ENCODE measurements at regions of chr14 and their contacts with region 1.

Region 1: GRCh38 chr14:52552063-52552988 is at the starts of genes GPR137C and TXNDC16:
- DNase-seq: peak; percentile 100
- H3K4me3 ChIP-seq: peak within 1 kb of the TSS; percentile 76 to 88 (median 84)
- H3K27ac ChIP-seq: peak within 1 kb of the TSS; percentile 37
- H3K4me1 ChIP-seq: peaks cover 9% of the 10 kb centered on the region
- H3K27me3 ChIP-seq: no peaks in the 10 kb centered on the region
- CTCF ChIP-seq: no peak
- POLR2A ChIP-seq: no peak
- total RNA-seq, gene GPR137C: 3.8 and 5.7 TPM in 2 replicates
- total RNA-seq, gene TXNDC16: 4.5 and 4.8 TPM in 2 replicates

Region 2: GRCh38 chr14:50667996-50668825 is 1884.1 kb before region 1 on chr14 and contains the start of gene SAV1:
- CTCF ChIA-PET with region 1: no interaction called
- POLR2A ChIA-PET with region 1: no interaction called
- dilution Hi-C with region 1: no loop called
- intact Hi-C with region 1: loop called (anchors 10 kb)
- DNase-seq: peak; percentile 82
- H3K4me3 ChIP-seq: peak within 1 kb of the TSS; percentile 70 to 85 (median 81)
- H3K27ac ChIP-seq: peak within 1 kb of the TSS; percentile 81
- H3K4me1 ChIP-seq: peaks cover 23% of the 10 kb centered on the region
- H3K27me3 ChIP-seq: no peaks in the 10 kb centered on the region
- CTCF ChIP-seq: no peak
- POLR2A ChIP-seq: peak; percentile 99
- total RNA-seq, gene SAV1: 27.8 and 31.0 TPM in 2 replicates

Region 3: GRCh38 chr14:52583544-52583943 is 31.2 kb after region 1 on chr14:
- CTCF ChIA-PET with region 1: interaction called, 3 read pairs
- POLR2A ChIA-PET with region 1: no interaction called
- dilution Hi-C with region 1: no loop called
- intact Hi-C with region 1: loop called (anchors 2 kb)
- DNase-seq: no peak
- H3K4me3 ChIP-seq: no peak overlapping the region
- H3K27ac ChIP-seq: no peak overlapping the region
- H3K4me1 ChIP-seq: peaks cover 12% of the 10 kb centered on the region
- H3K27me3 ChIP-seq: no peaks in the 10 kb centered on the region
- CTCF ChIP-seq: no peak
- POLR2A ChIP-seq: no peak

Region 4: DNA sequence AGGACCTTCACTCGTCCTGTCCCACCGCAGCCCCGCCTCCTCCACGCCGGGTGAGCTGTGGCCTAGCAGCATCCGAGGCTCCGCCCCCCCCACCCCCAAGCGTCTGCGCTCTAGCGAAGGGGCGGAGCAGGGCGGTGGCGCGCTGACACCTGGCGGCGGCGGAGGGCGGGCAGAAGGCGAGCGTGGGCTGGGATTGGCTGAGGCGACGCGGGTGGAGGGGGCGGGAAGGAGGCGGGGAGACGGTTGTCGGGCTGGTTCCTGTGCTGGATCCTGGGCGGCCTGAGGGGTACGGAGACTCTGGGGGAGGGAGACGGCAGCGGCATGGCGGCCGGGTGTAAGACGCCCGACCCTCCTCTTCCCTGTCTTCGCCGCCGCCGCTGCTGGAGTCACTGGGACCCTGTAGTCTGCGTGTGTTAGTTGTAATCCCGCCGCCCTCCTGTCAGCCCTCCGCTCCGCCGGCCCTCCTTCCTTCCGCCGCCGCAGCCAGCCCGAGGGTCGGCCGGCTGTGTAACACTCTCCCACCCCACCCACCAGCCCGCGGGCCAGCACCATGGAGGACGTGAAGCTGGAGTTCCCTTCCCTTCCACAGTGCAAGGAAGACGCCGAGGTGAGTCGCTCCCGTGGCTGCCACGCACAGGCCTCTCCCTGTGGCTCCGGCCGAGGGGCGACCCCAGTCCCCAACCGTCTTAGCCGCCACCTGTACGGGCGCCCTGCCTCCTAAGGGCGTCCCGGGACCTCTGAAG is 177.8 kb after region 1 on chr14 and contains the start of gene STYX:
- CTCF ChIA-PET with region 1: no interaction called
- POLR2A ChIA-PET with region 1: no interaction called
- dilution Hi-C with region 1: no loop called
- intact Hi-C with region 1: loop called (anchors 2 kb)
- DNase-seq: peak; percentile 99
- H3K4me3 ChIP-seq: peak within 1 kb of the TSS; percentile 50 to 98 (median 88)
- H3K27ac ChIP-seq: peak within 1 kb of the TSS; percentile 29
- H3K4me1 ChIP-seq: peaks cover 3% of the 10 kb centered on the region
- H3K27me3 ChIP-seq: no peaks in the 10 kb centered on the region
- CTCF ChIP-seq: no peak
- POLR2A ChIP-seq: peak; percentile 78
- total RNA-seq, gene STYX: 21.0 and 21.3 TPM in 2 replicates

Region 5: DNA sequence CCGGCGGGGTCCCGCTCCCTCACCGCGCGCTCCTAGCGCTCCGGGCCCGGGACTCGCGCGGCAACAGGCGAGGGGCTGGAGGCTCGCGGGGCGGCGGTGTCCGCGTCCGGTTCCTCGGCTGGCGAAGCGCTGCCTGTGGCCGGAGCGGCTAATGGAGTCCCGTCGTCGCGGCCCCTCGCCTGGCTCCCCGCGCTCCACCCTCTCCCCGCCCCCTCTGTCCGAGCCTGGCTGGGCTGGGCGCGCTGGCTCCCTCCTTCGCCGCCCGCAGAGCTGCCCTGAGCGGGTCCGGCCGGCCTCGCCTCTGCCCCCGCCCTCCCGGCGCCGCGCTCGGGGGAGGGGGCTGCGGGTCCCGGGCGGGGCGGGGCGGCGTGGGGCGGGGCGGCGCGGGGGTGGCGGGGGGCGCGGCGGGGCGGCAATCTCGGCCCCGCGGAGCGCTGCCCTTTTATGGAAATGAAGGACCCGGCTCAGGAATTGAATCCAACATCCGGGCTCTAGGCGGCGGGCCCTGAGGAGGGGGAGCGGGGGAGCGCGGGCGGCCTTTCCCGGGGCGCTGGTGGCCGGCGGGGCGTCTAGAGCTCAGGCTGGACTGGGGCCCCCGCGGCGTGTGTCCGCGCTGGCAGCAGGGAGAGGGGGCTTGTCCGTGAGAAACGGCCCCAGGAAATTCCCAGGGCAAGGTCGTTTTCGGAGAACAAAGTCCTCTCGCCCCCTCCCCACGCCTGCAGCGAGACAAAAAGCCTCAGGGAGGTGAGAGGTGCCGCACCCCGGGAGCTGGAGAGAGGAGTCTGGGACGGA is 398.8 kb after region 1 on chr14 and contains the start of gene FERMT2:
- CTCF ChIA-PET with region 1: interaction called, 4 read pairs
- POLR2A ChIA-PET with region 1: no interaction called
- dilution Hi-C with region 1: no loop called
- intact Hi-C with region 1: loop called (anchors 1 kb)
- DNase-seq: peak; percentile 87
- H3K4me3 ChIP-seq: peak within 1 kb of the TSS; percentile 74 to 96 (median 85)
- H3K27ac ChIP-seq: peak within 1 kb of the TSS; percentile 85
- H3K4me1 ChIP-seq: peaks cover 24% of the 10 kb centered on the region
- H3K27me3 ChIP-seq: no peaks in the 10 kb centered on the region
- CTCF ChIP-seq: no peak
- POLR2A ChIP-seq: peak; percentile 50
- total RNA-seq, gene FERMT2: 108 and 113 TPM in 2 replicates

Measured in endothelial cell of umbilical vein (primary cell).